ENCODE measurements at regions of chr17 and their contacts with region 1.

Region 1: GRCh38 chr17:50087246-50087911 is 7.8 kb upstream of the PDK2 start:
- DNase-seq: peak; percentile 95
- H3K4me3 Mint-ChIP-seq: no peak overlapping the region
- H3K27ac Mint-ChIP-seq: no peak overlapping the region
- H3K4me1 Mint-ChIP-seq: no peaks in the 10 kb centered on the region
- H3K27me3 Mint-ChIP-seq: no peaks in the 10 kb centered on the region

Region 2: GRCh38 chr17:49851387-49852291 is 235.7 kb before region 1 on chr17:
- intact Hi-C with region 1: loop called (anchors 10 kb)
- DNase-seq: peak; percentile 88
- H3K4me3 Mint-ChIP-seq: peak overlapping the region; percentile 87
- H3K27ac Mint-ChIP-seq: peak overlapping the region; percentile 81
- H3K4me1 Mint-ChIP-seq: peaks cover 15% of the 10 kb centered on the region
- H3K27me3 Mint-ChIP-seq: peaks cover 17% of the 10 kb centered on the region

Region 3: GRCh38 chr17:50026901-50027630 is 60.3 kb before region 1 on chr17:
- intact Hi-C with region 1: loop called (anchors 1 kb)
- DNase-seq: peak; percentile 93
- H3K4me3 Mint-ChIP-seq: peak overlapping the region; percentile 68
- H3K27ac Mint-ChIP-seq: no peak overlapping the region
- H3K4me1 Mint-ChIP-seq: peaks cover 7% of the 10 kb centered on the region
- H3K27me3 Mint-ChIP-seq: peaks cover 15% of the 10 kb centered on the region

Region 4: DNA sequence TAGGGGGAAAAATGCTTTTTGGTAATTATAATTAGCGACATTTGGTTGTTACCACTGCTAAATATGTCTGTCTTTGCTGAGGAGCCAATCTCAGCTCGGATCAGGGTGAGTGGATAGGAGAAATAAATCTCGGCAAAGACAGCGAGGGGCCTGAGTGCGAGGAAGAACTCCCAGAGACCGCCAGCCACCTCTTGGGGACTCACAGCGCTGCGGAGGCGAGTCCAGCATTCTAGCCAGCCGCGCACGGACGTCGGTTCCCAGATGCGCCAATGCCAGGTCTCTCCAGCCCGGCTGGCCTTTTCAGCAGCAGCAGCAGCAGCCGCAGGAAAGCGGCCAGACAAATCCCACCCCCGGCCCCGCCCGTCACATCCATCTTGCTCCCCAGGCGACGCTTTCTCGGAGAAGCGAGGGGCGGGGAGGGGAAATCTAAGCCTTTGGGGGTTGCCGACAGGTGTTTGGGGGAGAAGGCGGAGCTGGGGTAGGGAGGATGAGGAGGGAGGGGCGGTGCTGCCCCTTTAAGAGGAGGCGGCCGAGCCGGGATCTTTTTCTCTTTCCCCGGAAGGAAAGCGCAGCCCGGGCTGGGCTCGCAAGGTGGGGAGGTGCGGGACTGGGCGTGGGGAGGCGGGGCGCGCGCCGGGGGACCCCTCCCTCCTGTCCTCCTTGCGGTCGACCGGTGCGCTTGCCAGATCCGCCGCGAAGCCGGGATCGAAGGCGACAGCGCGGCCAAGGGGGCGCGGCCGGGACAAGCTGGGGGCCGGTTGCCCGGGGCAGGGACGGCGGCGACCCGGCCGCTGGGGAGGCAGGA is 31.8 kb before region 1 on chr17 and contains the start of gene ITGA3:
- intact Hi-C with region 1: loop called (anchors 2 kb)
- DNase-seq: peak; percentile 92
- H3K4me3 Mint-ChIP-seq: peak within 1 kb of the TSS; percentile 96
- H3K27ac Mint-ChIP-seq: peak within 1 kb of the TSS; percentile 89
- H3K4me1 Mint-ChIP-seq: peaks cover 42% of the 10 kb centered on the region
- H3K27me3 Mint-ChIP-seq: peaks cover 3% of the 10 kb centered on the region
- total RNA-seq, gene ITGA3: 14.5 and 15.0 TPM in 2 replicates

Region 5: DNA sequence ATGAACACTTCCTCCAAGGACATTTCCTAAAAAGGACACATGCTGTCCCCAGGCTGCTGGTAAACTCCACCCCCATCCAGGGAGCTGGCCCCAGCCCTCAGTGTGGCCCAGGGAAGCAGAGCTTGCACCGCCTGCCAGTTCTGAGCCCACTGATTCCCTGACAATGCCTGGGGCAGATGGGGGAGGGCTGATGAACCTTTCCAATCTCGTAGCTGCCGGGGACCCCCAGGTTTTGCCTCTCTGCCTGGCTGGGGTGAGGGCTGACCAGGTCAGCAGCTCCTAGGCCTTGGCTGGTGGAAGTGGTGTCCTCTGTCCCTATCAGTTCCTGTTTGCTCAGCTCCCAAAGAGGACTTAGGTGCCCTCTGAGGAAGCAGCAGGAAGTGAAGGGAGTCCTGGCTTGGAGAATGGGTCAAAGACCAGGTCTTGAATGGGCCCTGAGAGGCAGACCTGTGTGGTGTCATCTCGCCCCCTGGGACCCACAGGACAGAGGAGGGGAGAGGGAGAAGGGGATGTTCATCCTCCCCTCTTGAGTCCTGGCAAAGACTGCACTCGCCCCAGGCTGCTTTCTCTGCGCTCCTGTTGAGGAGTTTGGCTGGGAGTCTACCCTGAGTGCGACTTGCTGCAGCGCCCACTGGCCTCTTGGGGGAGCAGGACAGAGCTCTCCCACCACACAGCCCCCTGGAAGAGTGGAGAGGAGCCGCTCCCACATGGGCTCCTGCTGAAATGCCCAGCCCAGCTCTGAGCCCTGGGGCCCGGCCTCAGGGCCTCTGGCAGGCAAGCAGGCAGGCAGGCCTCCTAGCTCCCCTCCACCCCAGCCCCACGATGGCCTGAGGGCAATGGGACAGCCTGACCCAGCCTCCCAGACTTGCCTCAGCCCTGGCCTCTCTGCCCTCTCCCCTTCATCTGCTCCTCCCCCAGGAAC is 24.6 kb after region 1 on chr17:
- intact Hi-C with region 1: no loop called
- DNase-seq: no peak
- H3K4me3 Mint-ChIP-seq: no peak overlapping the region
- H3K27ac Mint-ChIP-seq: no peak overlapping the region
- H3K4me1 Mint-ChIP-seq: peaks cover 8% of the 10 kb centered on the region
- H3K27me3 Mint-ChIP-seq: peaks cover 16% of the 10 kb centered on the region